Mammary epithelial cell (primary cell): ENCODE measurements at regions of chr20 and their contacts with region 1.

Region 1: GRCh38 chr20:8476021-8476420 is 344.0 kb downstream of the PLCB1 start:
- DNase-seq: no peak
- H3K4me3 ChIP-seq: no peak overlapping the region
- H3K27ac ChIP-seq: no peak overlapping the region
- H3K4me1 ChIP-seq: no peaks in the 10 kb centered on the region
- H3K27me3 ChIP-seq: no peaks in the 10 kb centered on the region
- CTCF ChIP-seq: no peak

Region 2: GRCh38 chr20:8515810-8516435 is 39.9 kb after region 1 on chr20:
- CTCF ChIA-PET with region 1: no interaction called
- dilution Hi-C with region 1: loop called (anchors 5 kb)
- in situ Hi-C with region 1: no loop called
- intact Hi-C with region 1: no loop called
- DNase-seq: no peak
- H3K4me3 ChIP-seq: no peak overlapping the region
- H3K27ac ChIP-seq: no peak overlapping the region
- H3K4me1 ChIP-seq: no peaks in the 10 kb centered on the region
- H3K27me3 ChIP-seq: no peaks in the 10 kb centered on the region
- CTCF ChIP-seq: no peak

Region 3: GRCh38 chr20:8633366-8633765 is 157.3 kb after region 1 on chr20:
- CTCF ChIA-PET with region 1: no interaction called
- dilution Hi-C with region 1: no loop called
- in situ Hi-C with region 1: no loop called
- intact Hi-C with region 1: no loop called
- DNase-seq: no peak
- H3K4me3 ChIP-seq: no peak overlapping the region
- H3K27ac ChIP-seq: no peak overlapping the region
- H3K4me1 ChIP-seq: no peaks in the 10 kb centered on the region
- H3K27me3 ChIP-seq: no peaks in the 10 kb centered on the region
- CTCF ChIP-seq: no peak